Mammary epithelial cell (primary cell): ENCODE measurements at regions of chr16 and their contacts with region 1.

Region 1: DNA sequence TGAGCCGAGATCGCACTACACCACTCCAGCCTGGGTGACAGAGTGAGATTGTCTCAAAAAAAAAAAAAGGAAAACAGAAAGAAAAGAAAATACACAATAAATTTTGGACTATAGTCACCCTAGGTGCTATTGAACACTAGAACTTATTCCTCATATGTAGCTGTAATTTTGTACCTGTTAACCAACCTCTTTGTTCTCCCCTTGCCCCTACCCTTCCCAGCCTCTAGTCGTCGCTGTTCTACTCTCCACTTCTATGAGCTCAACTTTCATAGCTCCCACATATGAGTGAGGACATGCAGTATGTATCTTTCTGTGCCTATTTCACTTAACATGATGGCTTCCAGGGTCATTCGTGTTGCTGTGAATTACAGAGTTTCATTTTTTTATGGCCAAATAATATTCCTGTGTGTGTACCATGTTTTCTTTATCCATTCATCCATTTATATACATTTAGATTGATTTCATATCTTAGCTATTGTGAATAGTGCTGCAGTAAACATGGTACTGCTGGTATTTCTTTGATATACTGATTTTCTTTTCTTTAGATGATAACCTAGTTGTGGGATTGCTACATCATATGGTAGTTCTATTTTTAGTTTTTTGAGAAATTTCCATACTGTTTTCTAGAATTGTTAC is 28.3 kb downstream of the VPS35L start:
- DNase-seq: peak; percentile 43
- H3K4me3 ChIP-seq: no peak overlapping the region
- H3K27ac ChIP-seq: no peak overlapping the region
- H3K4me1 ChIP-seq: no peaks in the 10 kb centered on the region
- H3K27me3 ChIP-seq: no peaks in the 10 kb centered on the region
- CTCF ChIP-seq: peak; percentile 91 to 93

Region 2: DNA sequence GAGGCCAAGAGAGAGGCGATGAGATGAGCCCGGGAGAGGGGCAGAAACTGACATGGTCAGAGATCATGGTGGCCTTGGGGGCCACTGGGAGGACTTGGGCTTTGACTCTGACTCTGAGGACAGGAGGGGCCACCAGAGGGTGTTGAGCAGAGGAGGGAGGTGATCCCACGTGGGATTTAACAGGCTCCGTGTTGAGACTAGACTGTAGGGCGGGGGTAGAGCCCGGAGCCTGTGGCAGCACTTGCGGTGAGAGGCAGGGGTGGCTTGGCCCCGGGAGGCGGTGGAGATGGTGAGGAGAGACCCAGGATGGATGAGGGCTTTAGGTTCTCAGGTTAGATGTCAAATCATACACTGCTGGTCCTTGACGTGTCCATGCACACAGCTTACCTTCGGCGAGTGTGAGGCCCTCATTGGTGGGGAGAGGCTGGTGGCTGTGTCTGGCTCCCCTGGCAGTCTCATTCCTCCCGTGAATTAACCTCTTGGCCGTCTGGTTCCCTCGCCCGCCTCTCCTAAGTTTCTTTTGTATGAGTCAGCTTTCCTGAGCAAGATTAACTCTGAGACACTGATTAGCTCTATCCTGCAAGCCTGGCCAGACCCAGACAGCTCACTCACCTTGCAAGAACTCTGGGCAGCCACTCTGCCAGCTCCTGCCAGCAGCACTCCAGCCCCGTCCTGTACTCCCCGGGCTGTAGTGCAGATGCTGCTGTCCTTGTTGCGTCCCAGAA is 11.4 kb after region 1 on chr16:
- CTCF ChIA-PET with region 1: interaction called, 12 read pairs
- dilution Hi-C with region 1: no loop called
- in situ Hi-C with region 1: no loop called
- intact Hi-C with region 1: no loop called
- DNase-seq: no peak
- H3K4me3 ChIP-seq: no peak overlapping the region
- H3K27ac ChIP-seq: peak overlapping the region; percentile 2
- H3K4me1 ChIP-seq: peaks cover 16% of the 10 kb centered on the region
- H3K27me3 ChIP-seq: no peaks in the 10 kb centered on the region
- CTCF ChIP-seq: no peak

Region 3: GRCh38 chr16:19625039-19625438 is 41.3 kb after region 1 on chr16:
- CTCF ChIA-PET with region 1: interaction called, 14 read pairs
- dilution Hi-C with region 1: no loop called
- in situ Hi-C with region 1: no loop called
- intact Hi-C with region 1: no loop called
- DNase-seq: no peak
- H3K4me3 ChIP-seq: no peak overlapping the region
- H3K27ac ChIP-seq: no peak overlapping the region
- H3K4me1 ChIP-seq: no peaks in the 10 kb centered on the region
- H3K27me3 ChIP-seq: no peaks in the 10 kb centered on the region
- CTCF ChIP-seq: no peak

Region 4: DNA sequence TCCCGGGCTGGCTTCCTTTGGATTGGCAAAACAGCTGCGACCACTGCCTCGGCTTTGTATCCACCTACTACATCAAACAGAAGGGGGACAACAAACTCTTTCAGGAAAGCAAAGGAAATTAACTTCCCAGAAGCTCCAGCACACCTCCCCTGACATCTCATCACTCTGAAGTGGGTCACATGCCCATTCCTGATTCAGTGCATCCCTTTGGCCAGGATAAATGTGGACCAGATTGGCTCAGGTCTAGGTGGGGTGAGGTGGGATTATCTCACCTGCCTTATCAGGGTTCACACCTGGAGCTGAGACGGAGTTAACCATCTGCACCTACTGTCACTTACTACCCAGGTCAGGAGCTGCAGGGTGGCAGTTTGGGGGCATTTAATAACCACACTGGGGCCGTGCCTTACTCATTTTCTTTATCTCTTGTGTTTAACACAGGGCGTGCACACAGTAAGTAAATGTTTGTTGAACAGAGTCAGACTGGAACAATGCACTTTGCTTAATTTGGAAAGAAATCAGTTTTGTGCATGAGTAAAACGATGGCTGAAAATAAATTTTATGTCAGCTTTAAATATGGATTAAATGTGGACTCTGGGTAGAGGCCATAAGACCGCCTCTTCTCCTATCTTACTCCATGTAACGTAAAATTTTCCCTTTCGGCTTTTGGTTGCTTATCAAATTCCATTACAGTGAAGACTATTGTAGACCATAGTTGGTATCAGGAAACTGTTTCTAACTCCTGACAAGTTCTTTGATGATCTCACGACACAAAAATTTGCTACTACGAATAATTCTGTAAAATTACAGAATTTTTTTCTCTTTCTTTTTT is 170.2 kb after region 1 on chr16:
- CTCF ChIA-PET with region 1: no interaction called
- dilution Hi-C with region 1: no loop called
- in situ Hi-C with region 1: no loop called
- intact Hi-C with region 1: no loop called
- DNase-seq: no peak
- H3K4me3 ChIP-seq: no peak overlapping the region
- H3K27ac ChIP-seq: no peak overlapping the region
- H3K4me1 ChIP-seq: peaks cover 19% of the 10 kb centered on the region
- H3K27me3 ChIP-seq: no peaks in the 10 kb centered on the region
- CTCF ChIP-seq: no peak

Region 5: GRCh38 chr16:19872935-19873334 is 289.2 kb after region 1 on chr16:
- CTCF ChIA-PET with region 1: interaction called, 11 read pairs
- dilution Hi-C with region 1: no loop called
- in situ Hi-C with region 1: no loop called
- intact Hi-C with region 1: no loop called
- DNase-seq: no peak
- H3K4me3 ChIP-seq: no peak overlapping the region
- H3K27ac ChIP-seq: no peak overlapping the region
- H3K4me1 ChIP-seq: no peaks in the 10 kb centered on the region
- H3K27me3 ChIP-seq: no peaks in the 10 kb centered on the region
- CTCF ChIP-seq: no peak